ENCODE measurements at regions of chr3 and their contacts with region 1.

Region 1: GRCh38 chr3:98972155-98972554 is 70.7 kb upstream of the DCBLD2 start:
- DNase-seq: peak; percentile 86
- H3K4me3 ChIP-seq: no peak overlapping the region
- H3K27ac ChIP-seq: no peak overlapping the region
- H3K27me3 ChIP-seq: no peaks in the 10 kb centered on the region
- CTCF ChIP-seq: no peak

Region 2: DNA sequence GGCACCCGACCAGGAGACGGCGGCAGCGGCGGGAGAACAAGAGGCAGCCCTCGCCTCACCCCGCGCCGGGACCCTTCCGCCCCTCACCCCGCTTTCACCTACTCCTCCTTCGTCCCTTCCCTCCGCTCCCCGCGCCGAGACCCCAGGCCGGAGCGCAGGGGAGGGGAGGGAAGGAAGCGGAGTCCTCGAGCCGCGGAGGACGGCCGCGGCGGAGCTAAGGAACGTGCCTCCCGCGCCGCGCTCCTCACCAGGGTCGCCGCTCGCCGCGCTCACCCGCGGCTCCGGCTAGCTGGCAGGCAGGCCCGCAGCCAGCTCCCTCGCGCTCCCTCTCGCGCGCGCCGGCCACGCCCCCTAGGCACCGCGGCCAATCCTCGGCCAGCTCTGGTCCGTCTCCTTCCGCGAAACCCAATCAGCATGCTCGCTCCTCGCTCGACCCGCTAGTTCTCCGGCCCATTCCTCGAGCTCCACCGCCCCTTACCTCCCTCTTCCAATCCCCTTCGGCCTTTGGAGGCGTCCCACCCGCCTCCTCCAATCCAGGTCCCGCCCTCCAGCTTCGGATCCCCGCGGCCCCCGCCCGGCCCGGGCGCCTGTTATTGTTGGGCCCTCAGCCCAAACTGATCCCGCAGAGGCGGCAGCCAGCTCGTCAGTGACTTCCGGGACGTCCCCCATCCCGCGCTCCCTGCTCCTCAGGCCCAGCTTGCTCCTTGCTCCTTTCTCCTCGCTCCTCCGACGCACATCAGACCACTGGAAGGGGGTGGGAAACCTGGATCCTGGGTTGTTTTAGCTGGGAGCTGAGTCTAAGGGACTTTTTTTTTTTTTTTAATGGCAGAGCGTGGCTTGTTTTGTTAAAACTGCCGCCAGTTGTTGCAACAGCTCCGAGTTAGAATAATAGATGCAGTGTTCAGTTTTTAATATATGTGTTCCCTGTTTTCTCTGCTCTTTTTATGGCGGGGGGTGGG is 70.5 kb before region 1 on chr3 and contains the start of gene DCBLD2:
- CTCF ChIA-PET with region 1: no interaction called
- POLR2A ChIA-PET with region 1: interaction called, 15 read pairs
- DNase-seq: peak; percentile 99
- H3K4me3 ChIP-seq: peak within 1 kb of the TSS; percentile 89
- H3K27ac ChIP-seq: peak within 1 kb of the TSS; percentile 86
- H3K27me3 ChIP-seq: no peaks in the 10 kb centered on the region
- CTCF ChIP-seq: no peak
- polyA plus RNA-seq, gene DCBLD2: 158 and 202 TPM in 2 replicates